ENCODE measurements at regions of chr2 and their contacts with region 1.

Region 1: GRCh38 chr2:128090945-128091725 is at the start of gene UGGT1:
- DNase-seq: peak; percentile 97
- ATAC-seq: peak; percentile 99
- H3K4me3 ChIP-seq: peak within 1 kb of the TSS; percentile 92 to 96 (median 93)
- H3K27ac ChIP-seq: peak within 1 kb of the TSS; percentile 78
- H3K4me1 ChIP-seq: peaks cover 53% of the 10 kb centered on the region
- H3K27me3 ChIP-seq: no peaks in the 10 kb centered on the region; a peak in 1 of 5 replicates
- CTCF ChIP-seq: peak; percentile 48
- EP300 ChIP-seq: peak; percentile 66 to 74; a peak in 3 of 4 replicates
- POLR2A ChIP-seq: peak; percentile 87 to 94
- RAD21 ChIP-seq: no peak; the same call in 1 of the 2 replicates
- total RNA-seq, gene UGGT1: 56.4 and 83.2 TPM in 2 replicates

Region 2: GRCh38 chr2:128027801-128028667 is 63.1 kb before region 1 on chr2 and contains the start of gene SAP130:
- CTCF ChIA-PET with region 1: no interaction called
- POLR2A ChIA-PET with region 1: interaction called, 13 read pairs
- in situ Hi-C with region 1: no loop called
- intact Hi-C with region 1: loop called (anchors 1 kb)
- DNase-seq: peak; percentile 93
- ATAC-seq: peak; percentile 87
- H3K4me3 ChIP-seq: peak within 1 kb of the TSS; percentile 98 to 100 (median 100)
- H3K27ac ChIP-seq: peak within 1 kb of the TSS; percentile 91
- H3K4me1 ChIP-seq: peaks cover 26% of the 10 kb centered on the region
- H3K27me3 ChIP-seq: no peaks in the 10 kb centered on the region; a peak in 1 of 5 replicates
- CTCF ChIP-seq: no peak; the same call in 1 of the 2 replicates
- EP300 ChIP-seq: no peak
- POLR2A ChIP-seq: peak in 1 of 2 experiments; percentile 75; a peak in 3 of 4 replicates
- RAD21 ChIP-seq: 0 out of 2 replicates have a peak, but pooled peaks have one; percentile 31
- total RNA-seq, gene SAP130: 11.1 and 14.5 TPM in 2 replicates

Region 3: GRCh38 chr2:128062571-128062970 is 28.6 kb before region 1 on chr2:
- CTCF ChIA-PET with region 1: interaction called, 5 read pairs
- POLR2A ChIA-PET with region 1: interaction called, 5 read pairs
- in situ Hi-C with region 1: no loop called
- intact Hi-C with region 1: loop called (anchors 1 kb)
- DNase-seq: no peak
- ATAC-seq: no peak
- H3K4me3 ChIP-seq: no peak overlapping the region
- H3K27ac ChIP-seq: no peak overlapping the region
- H3K4me1 ChIP-seq: peaks cover 50% of the 10 kb centered on the region
- H3K27me3 ChIP-seq: no peaks in the 10 kb centered on the region; a peak in 1 of 5 replicates
- CTCF ChIP-seq: no peak
- EP300 ChIP-seq: no peak
- POLR2A ChIP-seq: no peak
- RAD21 ChIP-seq: no peak

Region 4: DNA sequence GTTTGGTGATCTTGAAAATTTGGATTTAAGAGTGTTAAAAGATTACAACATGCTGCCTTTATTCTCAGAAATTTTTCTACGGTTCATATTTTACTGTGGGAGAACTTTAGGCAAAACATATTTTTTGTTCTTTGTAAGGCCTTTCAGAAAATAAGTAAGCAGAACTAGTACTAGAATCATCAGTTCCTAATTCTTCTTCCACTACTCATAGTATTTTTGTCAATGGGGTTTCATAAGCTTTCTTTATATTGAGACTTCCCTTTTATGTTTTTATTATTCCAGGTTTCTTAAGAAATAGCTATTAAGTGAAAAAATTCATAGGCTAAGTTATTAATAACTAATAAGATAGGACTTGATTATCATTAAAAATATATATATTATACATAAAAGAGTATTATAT is 12.3 kb after region 1 on chr2:
- CTCF ChIA-PET with region 1: no interaction called
- POLR2A ChIA-PET with region 1: interaction called, 10 read pairs
- in situ Hi-C with region 1: no loop called
- intact Hi-C with region 1: no loop called
- DNase-seq: no peak
- ATAC-seq: no peak
- H3K4me3 ChIP-seq: no peak overlapping the region
- H3K27ac ChIP-seq: no peak overlapping the region
- H3K4me1 ChIP-seq: no peaks in the 10 kb centered on the region
- H3K27me3 ChIP-seq: no peaks in the 10 kb centered on the region
- CTCF ChIP-seq: no peak
- EP300 ChIP-seq: no peak
- POLR2A ChIP-seq: no peak
- RAD21 ChIP-seq: no peak

Region 5: DNA sequence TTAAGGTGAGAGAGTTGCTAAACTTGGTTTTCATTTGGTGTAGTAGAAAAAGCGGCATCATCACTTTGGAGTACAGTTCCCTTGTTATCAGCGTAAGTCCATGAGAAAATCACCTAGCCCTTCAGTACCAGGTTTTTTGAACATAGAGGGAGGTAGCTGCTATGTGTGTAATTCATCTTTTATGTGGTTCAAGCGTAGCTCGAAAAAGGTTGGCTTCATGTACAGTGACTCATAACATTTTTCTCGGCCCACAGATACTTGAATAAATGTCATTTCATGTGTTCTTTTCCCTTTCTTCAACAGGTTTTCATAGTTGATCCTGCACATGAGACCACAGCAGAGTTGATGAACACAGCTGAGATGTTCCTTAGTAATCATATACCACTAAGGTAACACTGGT is 43.4 kb after region 1 on chr2:
- CTCF ChIA-PET with region 1: no interaction called
- POLR2A ChIA-PET with region 1: no interaction called
- in situ Hi-C with region 1: no loop called
- intact Hi-C with region 1: no loop called
- DNase-seq: no peak
- ATAC-seq: no peak
- H3K4me3 ChIP-seq: no peak overlapping the region
- H3K27ac ChIP-seq: no peak overlapping the region
- H3K4me1 ChIP-seq: peaks cover 7% of the 10 kb centered on the region; the same call in 1 of the 2 replicates
- H3K27me3 ChIP-seq: no peaks in the 10 kb centered on the region
- CTCF ChIP-seq: no peak
- EP300 ChIP-seq: no peak
- POLR2A ChIP-seq: no peak
- RAD21 ChIP-seq: no peak

Region 6: GRCh38 chr2:128172191-128172590 is 81.1 kb after region 1 on chr2:
- CTCF ChIA-PET with region 1: no interaction called
- POLR2A ChIA-PET with region 1: interaction called, 7 read pairs
- in situ Hi-C with region 1: no loop called
- intact Hi-C with region 1: loop called (anchors 2 kb)
- DNase-seq: peak; percentile 55
- ATAC-seq: peak; percentile 14; the same call in 2 of the 3 replicates
- H3K4me3 ChIP-seq: no peak overlapping the region
- H3K27ac ChIP-seq: peak overlapping the region; percentile 91
- H3K4me1 ChIP-seq: peaks cover 80% of the 10 kb centered on the region
- H3K27me3 ChIP-seq: no peaks in the 10 kb centered on the region
- CTCF ChIP-seq: peak; percentile 85
- EP300 ChIP-seq: 0 out of 4 replicates have a peak, but pooled peaks of 1 of the 2 experiments have one; percentile 6
- POLR2A ChIP-seq: no peak
- RAD21 ChIP-seq: no peak

Region 7: DNA sequence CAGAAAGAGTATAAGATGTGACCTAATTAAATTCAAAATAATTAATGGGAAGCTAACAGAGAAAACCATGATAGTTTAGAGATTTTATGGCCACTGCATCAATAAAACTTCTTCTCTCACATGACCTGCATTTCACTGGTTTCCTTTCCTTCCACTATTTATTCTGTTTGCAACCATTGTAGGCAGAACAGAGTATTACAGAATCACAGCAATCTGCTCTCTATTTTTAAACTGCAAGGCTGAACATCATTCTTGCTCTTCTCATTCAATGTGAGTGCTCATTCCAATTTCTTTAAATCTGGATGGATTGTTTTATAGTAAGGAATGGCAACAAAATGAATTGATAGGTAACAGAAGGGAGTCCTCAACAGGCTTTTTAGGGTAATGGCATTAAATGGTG is 1172.8 kb after region 1 on chr2:
- CTCF ChIA-PET with region 1: no interaction called
- POLR2A ChIA-PET with region 1: no interaction called
- in situ Hi-C with region 1: no loop called
- intact Hi-C with region 1: no loop called
- DNase-seq: no peak
- ATAC-seq: no peak
- H3K4me3 ChIP-seq: no peak overlapping the region
- H3K27ac ChIP-seq: no peak overlapping the region
- H3K4me1 ChIP-seq: no peaks in the 10 kb centered on the region
- H3K27me3 ChIP-seq: no peaks in the 10 kb centered on the region
- CTCF ChIP-seq: no peak
- EP300 ChIP-seq: no peak
- POLR2A ChIP-seq: no peak
- RAD21 ChIP-seq: no peak